CD8-positive, alpha-beta T cell (primary cell): ENCODE measurements at regions of chr18 and their contacts with region 1.

Region 1: GRCh38 chr18:49486953-49487710 is at the start of gene C18orf32:
- DNase-seq: peak; percentile 87 to 97 (median 95)
- ATAC-seq: peak; percentile 85
- H3K4me3 ChIP-seq: peak within 1 kb of the TSS; percentile 76 to 80
- H3K4me3 Mint-ChIP-seq: peak within 1 kb of the TSS; percentile 97
- H3K27ac ChIP-seq: peak within 1 kb of the TSS; percentile 84 to 90
- H3K27ac Mint-ChIP-seq: peak within 1 kb of the TSS; percentile 98
- H3K4me1 ChIP-seq: peaks cover 49% of the 10 kb centered on the region
- H3K4me1 Mint-ChIP-seq: peaks cover 70% of the 10 kb centered on the region
- H3K27me3 ChIP-seq: no peaks in the 10 kb centered on the region
- H3K27me3 Mint-ChIP-seq: no peaks in the 10 kb centered on the region
- CTCF ChIP-seq: no peak
- total RNA-seq, gene C18orf32: 40.9 to 44.1 TPM

Region 2: DNA sequence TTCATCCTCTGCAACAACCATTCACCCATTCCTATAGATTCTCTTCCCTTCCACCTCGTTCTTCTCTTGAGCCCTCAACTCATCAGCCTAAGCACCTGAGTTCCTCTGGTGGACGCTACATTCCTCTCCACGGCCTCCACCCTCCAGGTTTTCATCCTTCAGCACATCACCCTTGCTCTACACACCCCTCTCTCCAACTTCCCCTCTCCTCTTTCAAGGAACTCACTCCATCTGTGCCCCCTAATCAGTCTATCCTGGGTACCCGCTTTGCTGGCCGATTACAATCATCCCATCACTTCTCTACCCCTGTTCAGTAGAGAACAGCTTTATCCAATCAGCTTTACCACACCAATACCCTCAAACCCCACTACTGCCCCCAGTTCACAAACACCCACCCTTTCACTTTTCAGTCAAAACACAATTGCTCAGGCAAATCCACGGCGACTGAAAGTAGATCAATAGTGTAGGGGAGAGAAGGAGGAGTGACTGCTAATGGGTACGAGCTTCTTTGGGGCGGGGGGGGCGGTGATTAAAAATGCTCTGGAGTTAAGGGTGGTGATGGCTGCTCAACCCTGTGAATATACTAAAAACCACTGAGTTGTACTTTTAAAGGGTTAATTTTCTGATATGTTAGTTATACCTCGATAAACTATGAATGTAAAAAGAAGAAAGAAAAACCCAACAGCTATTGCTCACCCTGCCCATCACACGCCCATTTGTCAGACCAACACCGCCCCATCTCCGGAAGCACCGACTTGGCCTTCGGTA is 27.5 kb before region 1 on chr18:
- CTCF ChIA-PET with region 1: interaction called, 5 read pairs
- POLR2A ChIA-PET with region 1: interaction called, 17 read pairs
- intact Hi-C with region 1: loop called (anchors 1 kb)
- DNase-seq: peak in 4 of 9 experiments; percentile 10 to 54 (median 30)
- ATAC-seq: peak; percentile 9
- H3K4me3 ChIP-seq: peak overlapping the region; percentile 88 to 94
- H3K4me3 Mint-ChIP-seq: peak overlapping the region; percentile 93
- H3K27ac ChIP-seq: peak overlapping the region in 1 of 2 experiments; percentile 74
- H3K27ac Mint-ChIP-seq: peak overlapping the region; percentile 90
- H3K4me1 ChIP-seq: peaks cover 17% of the 10 kb centered on the region
- H3K4me1 Mint-ChIP-seq: peaks cover 52% of the 10 kb centered on the region
- H3K27me3 ChIP-seq: no peaks in the 10 kb centered on the region
- H3K27me3 Mint-ChIP-seq: no peaks in the 10 kb centered on the region
- CTCF ChIP-seq: no peak

Region 3: DNA sequence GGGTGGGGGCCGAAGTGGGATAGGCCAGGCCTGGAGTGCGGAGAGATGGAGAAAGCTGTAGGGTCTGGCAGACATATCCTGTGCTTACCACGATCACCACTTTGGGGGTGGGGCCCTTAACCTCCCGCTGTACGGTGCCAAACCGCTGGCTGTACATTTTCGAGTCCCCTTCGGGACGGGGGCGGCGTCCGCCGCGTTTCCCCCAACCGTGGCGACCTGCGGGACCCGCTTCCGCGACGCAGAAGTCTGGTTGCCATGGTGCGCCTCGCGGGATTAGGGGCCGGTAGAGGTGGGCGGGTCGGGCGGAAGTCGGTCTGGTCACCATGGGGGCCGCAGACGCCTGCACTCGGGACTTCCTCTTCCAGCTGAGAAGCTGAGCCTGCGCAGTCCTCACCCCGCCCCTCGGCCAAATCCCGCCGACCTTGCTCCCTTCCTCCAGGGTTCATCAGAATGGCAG is 779.1 kb after region 1 on chr18 and contains the start of gene CFAP53:
- CTCF ChIA-PET with region 1: no interaction called
- POLR2A ChIA-PET with region 1: no interaction called
- intact Hi-C with region 1: loop called in 1 of 2 experiments (anchors 1 kb)
- DNase-seq: peak; percentile 58 to 93 (median 86)
- ATAC-seq: peak; percentile 83
- H3K4me3 ChIP-seq: peak within 1 kb of the TSS; percentile 38 to 67
- H3K4me3 Mint-ChIP-seq: peak within 1 kb of the TSS; percentile 88
- H3K27ac ChIP-seq: peak within 1 kb of the TSS; percentile 43 to 85
- H3K27ac Mint-ChIP-seq: peak within 1 kb of the TSS; percentile 85
- H3K4me1 ChIP-seq: peaks cover 18% of the 10 kb centered on the region
- H3K4me1 Mint-ChIP-seq: peaks cover 24% of the 10 kb centered on the region
- H3K27me3 ChIP-seq: no peaks in the 10 kb centered on the region
- H3K27me3 Mint-ChIP-seq: no peaks in the 10 kb centered on the region
- CTCF ChIP-seq: no peak
- total RNA-seq, gene CFAP53: 0.22 to 0.36 TPM

Region 4: DNA sequence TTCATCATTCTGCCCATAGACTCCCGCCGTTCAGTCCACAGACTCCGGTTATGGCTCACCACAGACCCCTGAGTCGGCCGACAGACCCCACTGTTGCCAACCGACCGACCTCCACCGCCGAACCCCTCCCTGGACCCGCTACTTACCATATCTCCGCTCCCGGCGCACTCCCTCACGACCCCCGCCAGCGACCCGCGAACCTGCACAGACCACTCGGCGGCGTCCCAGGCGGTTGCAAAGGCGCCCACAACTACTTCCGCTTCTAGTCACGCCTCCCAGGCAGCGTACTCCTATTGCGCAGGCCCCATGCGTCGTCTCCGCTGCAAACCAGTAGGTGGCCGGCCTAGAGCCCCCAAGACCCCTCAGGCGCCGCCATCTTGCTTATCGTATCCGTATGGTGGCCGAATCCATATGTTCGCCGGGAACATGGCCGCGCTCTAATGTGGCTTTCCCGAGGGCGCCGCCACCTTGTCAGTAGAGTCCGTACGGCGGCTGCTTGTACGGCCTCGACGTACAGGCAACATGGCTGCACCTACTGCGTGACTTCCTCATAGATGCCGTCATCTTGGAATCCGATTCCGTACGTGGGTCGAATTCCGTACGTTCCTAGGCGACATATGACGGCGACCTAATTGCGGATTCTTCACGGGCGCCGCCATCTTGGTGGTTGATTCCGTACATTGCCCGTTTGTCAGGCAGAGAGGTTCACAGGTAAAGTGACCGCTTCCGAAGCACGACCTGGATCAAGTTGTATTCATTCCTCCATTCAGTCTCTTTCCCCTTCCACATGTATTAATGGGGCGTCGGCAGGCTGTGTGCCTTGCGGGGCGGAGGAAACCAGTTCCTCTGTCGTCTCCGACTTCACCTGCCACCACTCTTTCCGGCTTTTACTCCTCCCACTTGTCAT is 800.6 kb after region 1 on chr18 and contains the start of gene CXXC1:
- CTCF ChIA-PET with region 1: no interaction called
- POLR2A ChIA-PET with region 1: no interaction called
- intact Hi-C with region 1: loop called (anchors 1 to 2 kb)
- DNase-seq: peak; percentile 96 to 100 (median 97)
- ATAC-seq: peak; percentile 88
- H3K4me3 ChIP-seq: peak within 1 kb of the TSS; percentile 91 to 98
- H3K4me3 Mint-ChIP-seq: peak within 1 kb of the TSS; percentile 99
- H3K27ac ChIP-seq: peak within 1 kb of the TSS; percentile 91 to 99
- H3K27ac Mint-ChIP-seq: peak within 1 kb of the TSS; percentile 99
- H3K4me1 ChIP-seq: peaks cover 14% of the 10 kb centered on the region
- H3K4me1 Mint-ChIP-seq: peaks cover 34% of the 10 kb centered on the region
- H3K27me3 ChIP-seq: no peaks in the 10 kb centered on the region
- H3K27me3 Mint-ChIP-seq: no peaks in the 10 kb centered on the region
- CTCF ChIP-seq: peak; percentile 22
- total RNA-seq, gene CXXC1: 107 to 119 TPM